Heart right ventricle (tissue), 16 donors: ENCODE measurements at regions of chr4 and their contacts with region 1.

Region 1: DNA sequence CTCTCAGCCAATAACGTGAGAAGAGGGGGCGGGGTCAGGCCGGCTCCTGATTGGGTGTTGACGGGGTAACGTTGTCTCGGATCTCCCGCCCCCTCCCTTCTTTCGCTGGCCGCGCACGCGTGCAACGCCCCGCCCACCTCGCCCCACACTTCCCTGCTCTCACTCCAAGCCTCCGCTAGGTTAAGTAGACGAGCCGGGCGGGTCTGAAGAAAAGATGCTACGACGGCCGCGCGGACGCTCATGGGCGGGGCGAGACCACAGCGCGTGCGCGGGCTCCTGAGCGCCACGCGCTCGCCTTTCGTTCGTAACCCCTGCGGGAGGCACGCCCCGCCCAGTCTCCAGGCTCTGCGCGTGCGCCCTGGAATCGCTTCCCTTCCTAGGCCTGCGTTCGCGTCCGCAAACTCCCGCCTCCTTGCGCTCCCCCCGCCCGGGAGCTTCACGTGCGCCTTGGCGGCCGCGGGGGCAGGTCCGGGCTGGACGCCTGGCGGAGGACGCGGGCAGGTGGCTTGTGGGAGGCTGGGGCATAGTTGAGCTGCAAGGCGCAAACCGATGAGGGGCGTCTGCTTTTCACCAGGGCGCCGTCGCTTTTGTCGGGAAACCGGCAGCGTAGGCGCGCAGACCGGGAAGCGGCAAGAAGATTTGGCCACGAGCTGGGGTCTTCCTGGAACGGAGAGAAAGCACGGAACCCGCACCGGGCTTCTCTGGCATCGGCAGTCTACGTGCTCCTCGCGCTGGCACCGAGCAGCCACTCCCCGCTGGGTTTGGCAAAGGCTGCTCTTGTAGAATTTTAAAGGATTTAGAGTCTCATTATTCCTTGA is 467 bp upstream of the PGRMC2 start:
- DNase-seq: peak; percentile 99 to 100
- ATAC-seq: peak; percentile 93 to 98 (median 96)
- H3K4me3 ChIP-seq: peak overlapping the region; percentile 67 to 93 (median 79)
- H3K27ac ChIP-seq: peak overlapping the region; percentile 60 to 97 (median 94)
- H3K4me1 ChIP-seq: peaks cover 0 to 43% (median 35%) of the 10 kb centered on the region in 9 donors
- H3K27me3 ChIP-seq: no peaks in the 10 kb centered on the region
- CTCF ChIP-seq: peak in 6 of 9 donors; percentile 10 to 44 (median 26)

Region 2: DNA sequence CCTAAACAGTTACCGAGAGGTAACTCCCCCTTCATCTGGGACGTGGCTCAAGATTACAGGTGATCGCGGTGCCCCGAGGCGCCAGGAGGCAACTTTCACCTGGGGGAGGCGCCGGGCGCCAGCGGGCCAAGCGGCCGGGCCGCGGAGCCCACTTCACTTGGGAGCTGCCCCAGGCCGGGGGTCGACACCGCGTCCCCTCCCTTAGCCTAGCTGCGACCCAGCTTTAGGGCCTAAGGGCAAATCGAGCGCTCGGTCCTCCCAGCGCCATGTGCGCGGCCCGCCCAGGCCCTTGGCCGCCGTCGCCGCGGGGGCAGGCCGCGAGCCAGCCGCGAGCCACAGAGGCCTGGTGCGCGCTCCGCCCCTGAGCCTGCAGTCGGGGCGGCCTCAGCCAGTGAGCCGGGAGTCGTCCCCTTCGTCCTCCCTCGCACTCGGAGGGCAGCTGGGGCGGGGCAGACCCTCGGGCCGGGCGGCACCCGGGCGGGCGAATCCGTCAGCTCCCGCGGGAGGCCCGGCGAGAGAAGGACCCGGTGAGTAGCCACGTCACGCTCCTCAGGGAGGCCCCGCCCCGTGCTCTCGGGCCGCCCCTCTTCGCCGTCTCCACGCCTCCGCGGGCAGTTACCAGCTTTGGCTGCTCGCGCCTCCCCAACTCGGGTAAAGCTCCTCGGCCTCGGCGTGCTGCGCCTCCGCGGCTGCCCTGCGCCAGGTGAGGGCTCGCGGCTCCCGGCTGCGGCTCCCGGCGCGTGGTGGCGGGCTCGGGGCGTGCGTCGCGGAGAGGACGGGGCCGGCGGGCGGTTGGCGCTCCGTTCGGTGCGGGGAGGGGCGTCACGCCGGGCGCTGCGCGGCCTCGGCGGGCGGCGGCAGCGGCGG is 227.1 kb before region 1 on chr4 and contains the start of gene LARP1B:
- intact Hi-C with region 1: loop called in 1 of 10 experiments (anchors 10 kb)
- DNase-seq: peak; percentile 95 to 96
- ATAC-seq: peak; percentile 96 to 98 (median 97)
- H3K4me3 ChIP-seq: peak within 1 kb of the TSS; percentile 58 to 85 (median 73)
- H3K27ac ChIP-seq: peak within 1 kb of the TSS; percentile 76 to 98 (median 94)
- H3K4me1 ChIP-seq: peaks cover 0 to 24% (median 9%) of the 10 kb centered on the region in 9 donors
- H3K27me3 ChIP-seq: no peaks in the 10 kb centered on the region
- CTCF ChIP-seq: peak in 2 of 9 donors; percentile 10 to 11
- total RNA-seq, gene LARP1B: 14.5 to 20.3 (median 18.9) TPM

Region 3: GRCh38 chr4:128379860-128380259 is 91.8 kb after region 1 on chr4:
- intact Hi-C with region 1: loop called in 2 of 10 experiments (anchors 5 to 10 kb)
- DNase-seq: peak in 1 of 2 donors; percentile 42
- ATAC-seq: peak; percentile 49 to 83 (median 72)
- H3K4me3 ChIP-seq: no peak overlapping the region
- H3K27ac ChIP-seq: no peak overlapping the region
- H3K4me1 ChIP-seq: peaks cover 0 to 5% (median 0%) of the 10 kb centered on the region in 9 donors
- H3K27me3 ChIP-seq: no peaks in the 10 kb centered on the region
- CTCF ChIP-seq: peak in 8 of 9 donors; percentile 22 to 66 (median 58)

Region 4: DNA sequence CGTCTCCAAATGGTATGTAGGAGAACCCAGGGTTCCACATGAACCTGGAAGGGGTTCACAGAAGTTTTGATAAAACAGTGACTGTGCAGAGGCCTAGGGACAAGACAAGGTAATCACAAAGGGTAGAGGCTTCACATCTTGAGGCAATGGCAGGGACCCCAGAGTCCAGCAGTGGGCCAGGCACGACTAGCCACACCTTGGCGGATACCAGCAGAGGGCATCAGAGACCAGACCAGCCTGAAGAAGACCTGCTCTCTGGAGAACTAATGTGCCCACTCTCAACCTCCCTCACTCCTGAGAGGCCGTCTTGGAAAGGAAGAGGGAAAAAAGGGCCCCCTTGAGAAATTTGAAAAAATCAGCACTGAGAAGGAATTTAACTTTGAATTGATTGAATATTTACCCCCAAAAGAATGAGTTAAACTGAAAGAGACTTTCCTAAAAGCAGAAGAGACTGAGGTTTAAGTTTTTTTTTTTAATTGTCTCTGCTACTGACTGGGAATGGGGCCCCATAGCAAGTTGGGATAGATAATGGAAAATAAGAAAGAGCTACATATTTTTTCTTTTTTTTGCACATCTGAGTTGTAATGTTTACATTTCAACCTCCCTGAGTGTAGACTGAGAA is 277.6 kb after region 1 on chr4:
- intact Hi-C with region 1: loop called in 1 of 10 experiments (anchors 10 kb)
- DNase-seq: peak in 1 of 2 donors; percentile 39
- ATAC-seq: peak; percentile 50 to 80 (median 77)
- H3K4me3 ChIP-seq: no peak overlapping the region
- H3K27ac ChIP-seq: no peak overlapping the region
- H3K4me1 ChIP-seq: peaks cover 0 to 21% (median 4%) of the 10 kb centered on the region in 9 donors
- H3K27me3 ChIP-seq: no peaks in the 10 kb centered on the region
- CTCF ChIP-seq: peak; percentile 25 to 66 (median 61)

Region 5: DNA sequence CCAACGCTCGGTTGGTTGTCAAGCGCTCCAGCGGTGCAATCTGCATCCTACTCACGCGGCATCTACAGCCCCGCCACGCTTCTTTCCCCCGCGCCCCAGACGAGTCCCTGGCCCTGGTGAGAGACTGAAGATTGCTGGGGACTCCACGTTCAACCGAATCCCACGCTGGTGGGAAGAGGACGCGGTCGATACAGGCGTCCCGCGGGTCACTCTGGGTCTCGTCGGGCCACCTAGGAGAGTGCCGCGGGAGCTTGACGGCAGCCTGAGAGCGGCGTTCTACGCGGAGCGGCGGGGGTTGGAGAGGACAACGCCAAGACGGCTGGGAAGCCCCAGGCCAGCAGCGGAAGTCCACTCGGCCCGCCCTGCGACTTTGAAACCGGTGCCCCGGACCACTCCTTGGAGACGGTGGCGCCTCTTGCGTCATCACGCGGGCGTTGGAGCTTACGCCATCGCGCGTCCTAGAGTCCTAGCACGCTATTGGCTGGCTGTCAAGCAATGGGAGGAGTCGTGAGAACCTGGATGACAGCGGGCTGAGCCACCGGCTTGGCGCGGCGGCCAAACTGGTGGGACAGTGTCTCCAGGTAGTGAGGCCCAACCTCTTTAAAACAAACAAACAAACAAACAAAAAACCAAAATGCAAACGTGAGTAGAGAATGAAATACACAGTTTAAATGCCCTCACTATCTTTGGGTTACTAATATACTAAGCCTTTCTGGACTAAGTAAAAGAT is 805.3 kb after region 1 on chr4 and contains the start of gene SCLT1:
- intact Hi-C with region 1: loop called in 2 of 10 experiments (anchors 10 kb)
- DNase-seq: peak; percentile 99
- ATAC-seq: peak; percentile 99 to 100 (median 99)
- H3K4me3 ChIP-seq: peak within 1 kb of the TSS; percentile 50 to 86 (median 78)
- H3K27ac ChIP-seq: peak within 1 kb of the TSS; percentile 80 to 98 (median 94)
- H3K4me1 ChIP-seq: peaks cover 0 to 53% (median 25%) of the 10 kb centered on the region in 9 donors
- H3K27me3 ChIP-seq: no peaks in the 10 kb centered on the region
- CTCF ChIP-seq: no peak
- total RNA-seq, gene SCLT1: 7.3 to 12.4 (median 10.3) TPM